Gastrocnemius medialis (tissue), 4 donors: ENCODE measurements at regions of chr7 and their contacts with region 1.

Region 1: GRCh38 chr7:139811066-139811465 is 18.0 kb upstream of the TBXAS1 start:
- DNase-seq: no peak
- ATAC-seq: no peak
- H3K4me3 ChIP-seq: no peak overlapping the region
- H3K27ac ChIP-seq: no peak overlapping the region
- H3K4me1 ChIP-seq: no peaks in the 10 kb centered on the region
- H3K27me3 ChIP-seq: no peaks in the 10 kb centered on the region
- CTCF ChIP-seq: no peak
- POLR2A ChIP-seq: no peak

Region 2: GRCh38 chr7:139328375-139328774 is 482.7 kb before region 1 on chr7:
- in situ Hi-C with region 1: no loop called
- intact Hi-C with region 1: no loop called
- DNase-seq: no peak
- ATAC-seq: no peak
- H3K4me3 ChIP-seq: no peak overlapping the region
- H3K27ac ChIP-seq: no peak overlapping the region
- H3K4me1 ChIP-seq: no peaks in the 10 kb centered on the region
- H3K27me3 ChIP-seq: no peaks in the 10 kb centered on the region
- CTCF ChIP-seq: no peak
- POLR2A ChIP-seq: no peak

Region 3: DNA sequence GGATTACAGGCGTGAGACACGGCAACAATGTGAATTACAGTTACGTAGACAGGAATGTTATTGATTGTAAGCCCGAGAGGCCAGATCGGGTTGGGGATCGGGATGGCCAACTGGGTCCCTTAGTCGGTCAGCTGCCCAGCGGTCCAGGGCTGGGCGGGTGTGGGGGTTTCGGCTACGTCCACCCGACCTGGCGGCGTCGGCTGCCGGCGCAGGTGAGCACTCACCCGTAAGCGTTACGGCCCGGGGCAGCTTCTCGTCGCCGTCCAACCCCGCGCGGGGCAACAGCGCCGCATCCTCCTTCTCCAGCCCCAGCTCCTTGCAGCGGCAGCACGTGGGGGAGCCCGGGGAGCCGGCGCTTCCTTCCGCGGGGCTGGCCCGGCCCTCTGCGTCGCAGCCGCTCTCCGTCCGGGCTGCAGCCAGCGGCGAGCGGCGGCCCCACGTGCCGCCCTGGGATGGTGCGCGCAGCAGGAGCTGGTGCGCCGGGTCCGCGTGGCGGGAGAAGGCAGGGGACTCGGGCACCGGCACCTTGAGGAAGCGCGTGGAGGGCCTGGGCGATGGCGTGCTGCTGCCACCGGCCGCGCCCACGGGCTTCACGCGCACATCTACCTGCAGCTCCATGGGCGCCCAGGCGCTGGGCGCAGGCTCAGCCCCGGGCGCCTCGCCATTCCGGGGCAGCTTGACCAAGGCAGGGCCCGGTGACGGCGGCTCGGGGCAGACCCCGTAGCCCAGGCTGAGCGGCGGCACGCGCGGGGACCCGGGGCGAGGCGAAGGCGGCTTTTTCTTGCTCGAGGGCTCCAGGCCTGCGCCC is 328.2 kb before region 1 on chr7:
- in situ Hi-C with region 1: loop called in 1 of 4 experiments (anchors 25 kb)
- intact Hi-C with region 1: no loop called
- DNase-seq: no peak
- ATAC-seq: no peak
- H3K4me3 ChIP-seq: peak overlapping the region; percentile 17 to 44 (median 36)
- H3K27ac ChIP-seq: no peak overlapping the region
- H3K4me1 ChIP-seq: peaks cover 0 to 8% of the 10 kb centered on the region in 2 donors
- H3K27me3 ChIP-seq: peaks cover 28 to 39% (median 33%) of the 10 kb centered on the region in 3 donors
- CTCF ChIP-seq: no peak
- POLR2A ChIP-seq: no peak

Region 4: GRCh38 chr7:139660317-139661042 is 150.6 kb before region 1 on chr7:
- in situ Hi-C with region 1: no loop called
- intact Hi-C with region 1: no loop called
- DNase-seq: no peak
- ATAC-seq: peak; percentile 18 to 24
- H3K4me3 ChIP-seq: no peak overlapping the region
- H3K27ac ChIP-seq: peak overlapping the region in 3 of 4 donors; percentile 51 to 59 (median 59)
- H3K4me1 ChIP-seq: peaks cover 31 to 34% of the 10 kb centered on the region in 2 donors
- H3K27me3 ChIP-seq: no peaks in the 10 kb centered on the region
- CTCF ChIP-seq: no peak
- POLR2A ChIP-seq: no peak